Panc1 (cell line): ENCODE measurements at regions of chr10 and their contacts with region 1.

Region 1: DNA sequence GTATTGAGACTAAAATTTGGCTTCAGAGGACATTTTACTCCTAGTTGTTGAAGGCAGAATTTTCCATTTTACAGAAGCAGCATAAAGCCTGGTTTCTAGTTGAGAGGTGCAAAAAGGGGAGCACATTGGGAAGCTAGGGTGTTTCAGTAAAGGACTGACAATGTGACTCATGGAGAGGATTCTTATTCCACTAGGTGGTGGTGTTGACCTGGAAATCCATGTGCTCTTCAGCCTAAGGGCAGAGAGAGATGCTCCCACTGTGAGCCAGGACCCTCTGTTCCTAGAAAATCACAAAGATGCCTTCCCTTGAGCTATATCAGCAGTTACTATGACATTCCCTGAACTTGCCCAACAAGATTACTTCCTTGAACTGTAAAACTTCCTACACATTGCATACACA is 687.8 kb downstream of the IPMK start:
- DNase-seq: peak; percentile 12
- ATAC-seq: peak; percentile 68; the same call in 1 of the 2 replicates
- H3K4me3 ChIP-seq: no peak overlapping the region
- H3K27ac ChIP-seq: no peak overlapping the region
- H3K4me1 ChIP-seq: no peaks in the 10 kb centered on the region
- H3K27me3 ChIP-seq: no peaks in the 10 kb centered on the region
- CTCF ChIP-seq: peak; percentile 50

Region 2: DNA sequence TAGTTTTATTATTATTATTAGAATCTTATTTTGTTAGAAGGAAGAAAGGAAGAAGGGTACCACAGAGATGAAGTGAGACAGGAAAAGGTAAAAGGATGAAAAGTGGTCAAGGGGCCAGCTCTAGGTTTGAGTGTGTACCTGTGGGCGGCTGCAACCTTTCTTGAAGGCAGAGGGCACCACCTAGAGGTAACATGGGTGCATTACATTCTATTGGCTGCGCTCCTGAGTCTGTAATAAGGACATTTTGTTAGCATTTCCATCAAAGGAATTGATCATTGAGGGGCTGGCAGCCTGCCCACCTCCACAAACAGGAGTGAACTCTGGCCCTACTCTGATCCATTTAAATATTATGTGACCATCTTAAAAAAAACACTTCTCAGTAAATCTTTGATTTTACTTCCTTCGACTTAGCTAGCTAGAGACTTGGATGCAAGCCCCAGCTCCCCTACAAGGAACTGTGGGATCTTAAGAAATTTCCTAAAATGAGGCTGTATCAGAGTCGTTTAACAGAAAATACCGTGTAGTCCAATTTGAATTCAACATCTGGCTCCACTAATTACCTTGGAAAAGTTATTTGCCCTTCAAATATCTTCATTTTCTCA is 77.3 kb after region 1 on chr10:
- CTCF ChIA-PET with region 1: no interaction called
- POLR2A ChIA-PET with region 1: no interaction called
- in situ Hi-C with region 1: no loop called
- intact Hi-C with region 1: loop called (anchors 5 kb)
- DNase-seq: peak; percentile 48
- ATAC-seq: peak; percentile 89
- H3K4me3 ChIP-seq: no peak overlapping the region
- H3K27ac ChIP-seq: no peak overlapping the region
- H3K4me1 ChIP-seq: no peaks in the 10 kb centered on the region
- H3K27me3 ChIP-seq: no peaks in the 10 kb centered on the region
- CTCF ChIP-seq: peak; percentile 94

Region 3: DNA sequence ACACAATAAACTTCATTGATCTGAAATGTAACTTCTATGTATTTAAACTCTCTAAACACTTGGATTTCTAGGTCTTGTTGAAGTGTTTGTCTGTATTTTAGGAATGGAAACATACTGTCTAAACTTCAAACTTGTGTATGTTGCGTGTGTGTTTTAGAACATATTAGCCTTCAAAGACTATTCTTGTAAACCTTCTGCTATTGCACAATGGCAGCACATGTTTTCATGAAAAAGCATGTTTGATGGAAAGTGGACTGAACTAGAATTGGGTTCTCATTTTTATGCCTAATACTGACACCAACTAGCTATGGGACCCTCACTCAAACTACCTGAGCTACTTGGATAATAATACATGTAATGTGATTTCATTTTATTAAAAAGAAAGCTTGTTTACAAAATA is 95.2 kb after region 1 on chr10:
- CTCF ChIA-PET with region 1: no interaction called
- POLR2A ChIA-PET with region 1: no interaction called
- in situ Hi-C with region 1: no loop called
- intact Hi-C with region 1: no loop called
- DNase-seq: no peak
- ATAC-seq: no peak
- H3K4me3 ChIP-seq: no peak overlapping the region
- H3K27ac ChIP-seq: no peak overlapping the region
- H3K4me1 ChIP-seq: no peaks in the 10 kb centered on the region
- H3K27me3 ChIP-seq: no peaks in the 10 kb centered on the region
- CTCF ChIP-seq: no peak

Region 4: DNA sequence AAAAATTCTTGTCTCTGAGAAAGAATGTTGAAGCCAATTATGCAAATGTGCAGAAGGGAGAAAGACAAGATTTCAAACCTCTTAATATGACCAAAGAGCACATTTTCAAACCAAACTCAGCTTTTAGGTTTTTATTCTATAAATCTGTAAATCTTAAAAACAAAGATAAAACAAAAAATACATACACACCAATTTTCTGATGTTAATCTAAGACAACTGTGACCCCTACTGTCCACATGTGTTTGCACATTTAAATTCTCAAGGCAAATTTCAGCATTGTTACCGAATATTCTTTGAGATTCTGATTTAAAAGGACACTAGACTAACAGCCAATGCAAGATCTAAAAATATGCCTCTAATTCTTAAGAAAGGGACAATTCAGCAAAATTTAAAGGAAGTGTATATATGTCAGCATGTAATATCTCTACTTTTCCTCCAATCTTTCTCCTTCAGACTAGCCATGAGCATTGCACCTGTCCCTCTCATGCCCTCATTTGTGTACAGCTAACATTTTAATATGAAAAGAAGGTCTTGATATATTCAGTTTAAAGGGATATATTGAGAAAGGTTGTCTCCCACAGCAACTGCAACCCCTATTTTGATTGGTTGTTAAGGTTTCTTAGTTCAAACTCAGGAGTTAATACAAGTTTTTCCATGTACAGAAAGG is 269.9 kb after region 1 on chr10:
- CTCF ChIA-PET with region 1: no interaction called
- POLR2A ChIA-PET with region 1: no interaction called
- in situ Hi-C with region 1: no loop called
- intact Hi-C with region 1: loop called (anchors 10 kb)
- DNase-seq: peak; percentile 5
- ATAC-seq: no peak
- H3K4me3 ChIP-seq: no peak overlapping the region
- H3K27ac ChIP-seq: no peak overlapping the region
- H3K4me1 ChIP-seq: no peaks in the 10 kb centered on the region
- H3K27me3 ChIP-seq: no peaks in the 10 kb centered on the region
- CTCF ChIP-seq: peak; percentile 52; the same call in 1 of the 2 replicates

Region 5: GRCh38 chr10:57983281-57983791 is 403.4 kb after region 1 on chr10:
- CTCF ChIA-PET with region 1: no interaction called
- POLR2A ChIA-PET with region 1: no interaction called
- in situ Hi-C with region 1: no loop called
- intact Hi-C with region 1: no loop called
- DNase-seq: no peak
- ATAC-seq: no peak
- H3K4me3 ChIP-seq: no peak overlapping the region
- H3K27ac ChIP-seq: no peak overlapping the region
- H3K4me1 ChIP-seq: no peaks in the 10 kb centered on the region
- H3K27me3 ChIP-seq: no peaks in the 10 kb centered on the region
- CTCF ChIP-seq: no peak